Mammary epithelial cell (primary cell): ENCODE measurements at regions of chrX and their contacts with region 1.

Region 1: DNA sequence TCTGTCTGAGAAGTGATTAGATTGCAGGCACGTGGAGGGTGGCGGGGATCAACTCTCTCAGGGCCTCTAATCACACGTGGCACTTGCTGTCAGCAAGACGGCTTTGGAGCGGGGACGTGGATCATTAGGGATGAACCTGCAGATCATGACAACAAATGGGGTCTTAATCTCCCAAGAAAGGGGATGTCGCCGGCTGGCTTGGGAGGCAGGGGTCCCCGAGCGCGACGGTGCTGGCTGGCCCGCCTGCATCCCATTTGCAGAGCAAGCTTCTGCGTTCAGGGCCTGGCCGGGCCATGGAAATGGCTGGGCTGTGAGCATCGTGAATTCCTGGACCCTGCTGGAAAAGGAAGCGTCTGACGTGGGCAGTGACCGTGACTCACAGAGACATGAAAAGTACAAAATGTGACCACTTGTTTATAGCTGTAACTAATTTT is 85.1 kb upstream of the SHOX start:
- DNase-seq: no peak
- H3K4me3 ChIP-seq: no peak overlapping the region
- H3K27ac ChIP-seq: no peak overlapping the region
- H3K4me1 ChIP-seq: no peaks in the 10 kb centered on the region
- H3K27me3 ChIP-seq: no peaks in the 10 kb centered on the region
- CTCF ChIP-seq: no peak

Region 2: DNA sequence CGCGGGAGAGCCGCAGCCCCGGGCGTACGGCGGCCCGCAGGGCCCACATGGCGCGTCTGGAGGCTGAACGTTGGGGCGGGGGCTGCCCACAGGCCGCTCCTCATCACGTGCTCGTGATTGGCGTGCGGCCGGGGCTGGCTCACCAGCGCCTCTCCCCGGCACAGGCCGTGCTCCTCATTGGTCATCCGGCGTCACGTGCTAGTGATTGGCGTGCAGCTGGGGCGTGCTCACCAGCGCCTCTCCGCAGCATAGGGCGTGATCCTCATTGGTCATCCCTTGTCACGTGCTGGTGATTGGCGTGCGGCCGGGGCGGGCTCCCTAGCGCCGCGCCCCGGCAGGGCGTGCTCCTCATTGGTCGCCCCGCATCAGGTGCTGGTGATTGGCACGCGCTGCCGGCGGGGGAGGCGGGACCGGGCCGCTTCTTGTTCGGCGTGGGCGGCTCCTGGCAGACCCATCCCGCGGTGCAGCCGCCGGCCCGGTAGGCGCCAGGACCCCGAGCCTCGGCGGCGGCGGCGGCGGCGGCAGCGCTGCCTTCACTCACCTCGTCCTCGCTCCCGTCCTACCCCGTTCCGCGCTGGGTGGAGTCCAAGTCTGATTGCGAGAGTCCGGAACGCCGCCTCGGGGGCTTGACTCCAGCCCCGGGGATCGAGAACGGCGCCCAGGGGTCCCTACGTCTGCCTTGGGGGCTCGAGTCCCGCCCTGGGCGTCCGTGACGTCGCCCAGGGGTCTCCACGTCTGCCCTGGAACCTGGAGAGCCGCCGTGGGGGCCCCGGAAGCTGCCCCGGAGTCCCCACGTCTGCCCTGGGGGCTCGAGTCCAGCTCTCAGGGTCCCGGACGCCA is 226.5 kb before region 1 on chrX and contains the start of gene GTPBP6:
- CTCF ChIA-PET with region 1: no interaction called
- dilution Hi-C with region 1: no loop called
- in situ Hi-C with region 1: no loop called
- intact Hi-C with region 1: no loop called
- DNase-seq: peak; percentile 100
- H3K4me3 ChIP-seq: peak within 1 kb of the TSS; percentile 87 to 99 (median 97)
- H3K27ac ChIP-seq: peak within 1 kb of the TSS; percentile 82
- H3K4me1 ChIP-seq: peaks cover 10% of the 10 kb centered on the region
- H3K27me3 ChIP-seq: peaks cover 2% of the 10 kb centered on the region
- CTCF ChIP-seq: peak in 1 of 2 donors; percentile 28
- total RNA-seq, gene GTPBP6: 28.0 to 46.7 TPM

Region 3: DNA sequence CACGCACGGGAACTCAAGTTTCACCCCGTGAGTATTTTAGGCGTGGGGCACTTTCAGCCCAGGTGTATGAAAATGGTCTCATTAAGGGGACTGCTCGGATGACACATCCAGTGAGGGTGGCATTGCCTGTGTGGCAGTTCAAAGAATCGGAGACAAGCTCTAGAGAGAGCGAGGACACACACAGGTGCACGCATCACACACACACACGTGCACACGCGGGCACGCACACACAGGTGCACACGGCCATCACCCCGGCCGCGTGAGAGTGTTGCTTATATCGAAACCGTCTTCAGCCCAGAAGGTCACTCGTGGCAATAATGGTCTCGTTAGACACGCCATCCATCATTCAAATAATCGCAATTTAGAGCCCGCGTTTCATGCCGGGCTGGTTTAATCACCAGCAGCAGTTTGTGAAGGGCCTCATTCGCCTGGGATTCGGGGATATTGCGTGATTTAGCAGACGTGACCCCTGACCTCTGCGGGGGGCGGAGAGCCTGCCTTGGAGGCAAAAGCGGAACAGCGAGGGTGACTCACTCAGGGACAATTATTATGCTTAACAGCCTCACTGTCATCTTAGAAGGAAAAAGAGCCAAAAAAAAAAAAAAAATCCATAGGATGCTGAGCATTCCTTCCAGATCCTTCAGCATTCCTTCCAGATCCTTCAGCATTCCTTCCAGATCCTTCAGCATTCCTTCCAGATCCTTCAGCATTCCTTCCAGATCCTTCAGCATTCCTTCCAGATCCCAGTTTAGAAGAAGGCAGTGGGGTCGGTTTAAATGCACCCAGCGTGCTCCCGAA is 69.3 kb before region 1 on chrX:
- CTCF ChIA-PET with region 1: no interaction called
- dilution Hi-C with region 1: no loop called
- in situ Hi-C with region 1: no loop called
- intact Hi-C with region 1: no loop called
- DNase-seq: no peak
- H3K4me3 ChIP-seq: no peak overlapping the region
- H3K27ac ChIP-seq: no peak overlapping the region
- H3K4me1 ChIP-seq: no peaks in the 10 kb centered on the region
- H3K27me3 ChIP-seq: no peaks in the 10 kb centered on the region
- CTCF ChIP-seq: no peak

Region 4: GRCh38 chrX:499870-500364 is 45.6 kb before region 1 on chrX:
- CTCF ChIA-PET with region 1: no interaction called
- dilution Hi-C with region 1: no loop called
- in situ Hi-C with region 1: no loop called
- intact Hi-C with region 1: no loop called
- DNase-seq: no peak
- H3K4me3 ChIP-seq: no peak overlapping the region
- H3K27ac ChIP-seq: no peak overlapping the region
- H3K4me1 ChIP-seq: no peaks in the 10 kb centered on the region
- H3K27me3 ChIP-seq: no peaks in the 10 kb centered on the region
- CTCF ChIP-seq: no peak

Region 5: GRCh38 chrX:623599-624315 is 78.3 kb after region 1 on chrX:
- CTCF ChIA-PET with region 1: no interaction called
- dilution Hi-C with region 1: loop called (anchors 10 kb)
- in situ Hi-C with region 1: no loop called
- intact Hi-C with region 1: no loop called
- DNase-seq: no peak
- H3K4me3 ChIP-seq: no peak overlapping the region
- H3K27ac ChIP-seq: no peak overlapping the region
- H3K4me1 ChIP-seq: no peaks in the 10 kb centered on the region
- H3K27me3 ChIP-seq: peaks cover 13% of the 10 kb centered on the region
- CTCF ChIP-seq: no peak

Region 6: GRCh38 chrX:896256-896655 is 350.8 kb after region 1 on chrX:
- CTCF ChIA-PET with region 1: no interaction called
- dilution Hi-C with region 1: loop called (anchors 10 kb)
- in situ Hi-C with region 1: no loop called
- intact Hi-C with region 1: no loop called
- DNase-seq: no peak
- H3K4me3 ChIP-seq: no peak overlapping the region
- H3K27ac ChIP-seq: no peak overlapping the region
- H3K4me1 ChIP-seq: no peaks in the 10 kb centered on the region
- H3K27me3 ChIP-seq: no peaks in the 10 kb centered on the region
- CTCF ChIP-seq: no peak